ENCODE measurements at regions of chr2 and their contacts with region 1.

Region 1: GRCh38 chr2:95121407-95122196 is at the start of gene MRPS5:
- DNase-seq: peak; percentile 73 to 92 (median 84)
- H3K4me3 ChIP-seq: peak within 1 kb of the TSS; percentile 74 to 100 (median 95)
- H3K27ac ChIP-seq: peak within 1 kb of the TSS; percentile 66 to 99 (median 95)
- H3K27me3 ChIP-seq: no peaks in the 10 kb centered on the region
- CTCF ChIP-seq: peak in 28 of 56 donors; percentile 5 to 53 (median 26)
- total RNA-seq, gene MRPS5: 47.0 to 101 (median 70.2) TPM

Region 2: DNA sequence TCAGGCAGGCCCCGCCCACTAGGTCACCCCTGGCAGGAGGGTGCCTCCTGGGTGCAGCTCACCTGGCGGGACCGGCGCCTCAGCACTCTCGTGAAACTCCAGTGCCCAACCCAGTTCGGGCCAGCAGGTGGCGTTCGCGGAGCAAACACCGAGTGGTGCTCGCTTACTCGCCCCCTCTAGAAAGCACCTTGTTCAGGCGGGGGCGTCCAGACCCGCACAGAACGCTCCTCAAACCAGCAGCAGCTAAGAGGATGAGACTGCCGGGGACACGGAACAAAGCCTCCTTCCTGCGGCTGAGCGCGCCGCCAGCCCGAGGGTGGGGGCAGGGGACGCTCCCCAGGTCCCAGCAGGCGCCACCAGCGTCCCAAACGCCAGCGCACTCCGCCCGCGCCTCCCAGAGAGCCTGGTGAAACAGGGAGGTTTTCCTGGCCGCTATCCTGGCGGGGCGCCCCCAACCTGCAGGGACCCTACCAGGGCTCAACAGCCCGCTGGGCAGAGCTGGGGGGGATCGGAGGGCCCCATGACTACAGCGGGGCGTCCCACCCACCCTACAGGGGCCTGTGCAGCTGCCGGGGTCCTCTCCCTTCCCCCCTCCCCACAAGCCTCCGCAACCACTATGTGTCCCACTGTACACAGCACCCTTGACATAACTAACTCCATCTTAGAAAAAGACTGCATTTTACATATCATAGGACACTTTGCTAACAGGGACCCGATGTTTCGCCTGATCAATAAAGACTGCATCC is 44.6 kb before region 1 on chr2:
- intact Hi-C with region 1: loop called in 1 of 2 experiments (anchors 5 kb)
- DNase-seq: peak; percentile 71 to 90 (median 88)
- H3K4me3 ChIP-seq: peak overlapping the region; percentile 33 to 80 (median 61)
- H3K27ac ChIP-seq: peak overlapping the region in 55 of 59 donors; percentile 0 to 98 (median 88)
- H3K27me3 ChIP-seq: peaks cover 0 to 18% (median 0%) of the 10 kb centered on the region in 45 donors
- CTCF ChIP-seq: peak; percentile 76 to 97 (median 89)

Region 3: DNA sequence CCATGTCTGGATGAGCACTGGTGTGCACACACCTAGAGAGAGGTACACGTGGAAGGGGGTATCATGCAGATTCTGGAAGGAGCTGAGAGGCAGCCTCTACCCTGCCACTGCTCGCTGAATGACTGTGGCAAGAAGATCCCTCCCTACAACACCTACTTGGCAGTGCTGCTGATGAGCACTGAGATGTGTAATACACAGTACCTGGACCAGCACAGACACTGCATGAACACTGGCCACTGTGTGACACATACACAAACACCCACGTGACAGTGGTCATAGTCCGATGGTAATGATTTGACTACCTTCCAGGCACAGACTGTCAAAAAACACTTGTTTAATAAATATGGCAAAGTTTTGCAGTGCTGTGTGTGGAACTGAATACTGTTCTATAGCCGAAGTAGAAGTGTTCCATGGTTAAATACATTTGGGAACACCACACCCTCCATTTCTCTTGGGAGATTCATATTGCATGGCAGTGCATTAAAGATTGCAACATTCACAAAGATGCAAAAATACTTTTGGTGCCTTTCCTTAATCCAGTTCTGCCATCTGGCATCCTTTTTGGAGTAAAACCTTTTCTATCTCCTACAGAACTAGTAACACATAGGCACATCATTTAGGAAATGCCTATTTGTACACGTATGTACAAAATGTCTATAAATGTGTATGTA is 29.6 kb before region 1 on chr2:
- intact Hi-C with region 1: no loop called
- DNase-seq: no peak
- H3K4me3 ChIP-seq: no peak overlapping the region
- H3K27ac ChIP-seq: peak overlapping the region in 5 of 59 donors; percentile 2 to 51 (median 10)
- H3K27me3 ChIP-seq: no peaks in the 10 kb centered on the region
- CTCF ChIP-seq: no peak

Region 4: DNA sequence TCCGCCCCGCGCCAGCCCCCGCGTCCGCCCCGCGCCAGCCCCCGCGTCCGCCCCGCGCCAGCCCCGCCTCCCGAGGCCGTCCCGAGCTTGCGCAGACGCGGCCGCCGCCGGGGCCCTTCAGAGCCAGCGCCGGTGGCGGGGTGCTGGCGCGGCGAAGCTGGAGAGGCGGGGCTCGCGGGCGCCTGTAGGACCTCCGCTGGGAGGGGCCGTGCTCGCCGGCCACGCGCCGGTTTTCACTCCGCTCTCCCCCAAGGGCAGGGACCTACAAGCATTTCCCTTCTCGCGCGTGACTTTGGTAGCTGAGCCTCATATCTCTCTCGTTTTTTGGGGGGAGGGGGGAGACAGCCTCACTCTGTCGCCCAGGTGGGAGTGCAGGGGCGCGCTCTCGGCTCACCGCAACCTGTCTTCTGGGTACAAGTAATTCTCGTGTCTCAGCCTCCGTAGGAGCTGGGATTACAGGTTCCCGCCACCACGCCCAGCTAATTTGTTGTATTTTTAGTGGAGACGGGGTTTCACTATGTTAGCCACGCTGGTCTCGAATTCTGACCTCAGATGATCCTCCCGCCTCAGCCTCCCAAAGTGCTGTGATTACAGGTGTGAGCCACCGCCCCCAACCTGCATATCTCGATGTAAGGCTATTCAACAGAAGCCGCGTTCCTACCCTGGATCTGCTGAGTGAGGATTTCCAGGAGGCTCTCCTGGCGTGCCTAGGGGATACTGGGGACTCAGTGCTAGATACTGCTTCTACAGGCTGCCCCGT is 38.3 kb after region 1 on chr2 and contains the start of gene ZNF514:
- intact Hi-C with region 1: loop called (anchors 2 to 5 kb)
- DNase-seq: peak; percentile 64 to 90 (median 78)
- H3K4me3 ChIP-seq: peak within 1 kb of the TSS; percentile 57 to 91 (median 83)
- H3K27ac ChIP-seq: peak within 1 kb of the TSS; percentile 29 to 95 (median 90)
- H3K27me3 ChIP-seq: no peaks in the 10 kb centered on the region
- CTCF ChIP-seq: peak in 1 of 56 donors; percentile 19
- total RNA-seq, gene ZNF514: 17.2 to 58.5 (median 36.2) TPM

Region 5: GRCh38 chr2:95165129-95166064 is 43.8 kb after region 1 on chr2 and contains the start of gene ZNF2:
- intact Hi-C with region 1: loop called in 1 of 2 experiments (anchors 2 kb)
- DNase-seq: peak; percentile 97 to 99 (median 98)
- H3K4me3 ChIP-seq: peak within 1 kb of the TSS; percentile 63 to 100 (median 92)
- H3K27ac ChIP-seq: peak within 1 kb of the TSS; percentile 53 to 99 (median 93)
- H3K27me3 ChIP-seq: no peaks in the 10 kb centered on the region
- CTCF ChIP-seq: peak in 40 of 56 donors; percentile 9 to 67 (median 41)
- total RNA-seq, gene ZNF2: 4.3 to 9.8 (median 6.6) TPM

Region 6: DNA sequence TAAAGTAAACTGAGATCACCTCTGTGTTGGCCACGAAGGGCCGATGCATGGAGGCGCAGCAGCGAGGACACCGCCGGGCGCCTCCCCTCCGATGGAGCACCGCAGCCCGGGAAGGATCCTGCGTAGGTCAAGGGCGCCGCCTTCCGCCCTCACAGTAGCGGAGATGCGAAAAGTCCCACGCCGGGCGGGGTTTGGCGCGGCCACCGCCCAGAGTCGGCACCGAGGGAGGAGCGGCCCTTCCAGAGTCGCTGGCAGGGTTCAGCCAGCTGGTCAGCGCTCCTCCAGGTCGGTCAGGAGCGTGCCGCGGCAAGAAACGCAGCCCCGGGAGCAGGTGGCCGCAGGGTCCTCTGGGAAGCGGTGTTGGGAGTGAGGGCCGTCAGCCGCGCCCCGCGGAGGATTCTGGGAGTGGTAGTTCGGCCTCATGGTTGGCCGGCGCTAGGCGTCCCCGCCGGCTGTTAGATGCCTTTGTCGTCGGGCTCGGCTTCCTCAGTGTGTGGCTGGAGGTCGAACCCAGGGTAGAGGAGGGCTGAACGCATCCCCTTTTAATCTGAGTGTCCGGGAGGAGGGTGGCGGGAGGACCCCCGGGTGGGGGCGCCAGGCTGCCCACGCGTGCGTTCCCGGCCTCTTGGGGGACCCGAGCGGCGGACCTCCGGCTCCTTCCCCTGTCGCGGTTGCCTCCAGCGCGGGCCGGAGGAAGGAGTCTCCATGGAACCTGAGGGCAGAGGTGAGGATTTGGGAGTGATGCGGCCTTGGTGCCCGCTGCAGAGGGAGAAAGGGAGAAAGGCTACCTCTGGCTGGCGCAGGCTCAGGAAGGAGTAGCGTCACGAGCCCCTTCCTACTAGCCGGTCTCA is 85.7 kb after region 1 on chr2 and contains the start of gene ZNF892:
- intact Hi-C with region 1: loop called in 1 of 2 experiments (anchors 5 kb)
- DNase-seq: peak; percentile 87 to 95 (median 92)
- H3K4me3 ChIP-seq: peak within 1 kb of the TSS; percentile 66 to 98 (median 87)
- H3K27ac ChIP-seq: peak within 1 kb of the TSS in 58 of 59 donors; percentile 34 to 97 (median 90)
- H3K27me3 ChIP-seq: no peaks in the 10 kb centered on the region
- CTCF ChIP-seq: peak; percentile 19 to 89 (median 61)
- total RNA-seq, gene ZNF892: 11.3 to 29.3 (median 18.7) TPM

Region 7: DNA sequence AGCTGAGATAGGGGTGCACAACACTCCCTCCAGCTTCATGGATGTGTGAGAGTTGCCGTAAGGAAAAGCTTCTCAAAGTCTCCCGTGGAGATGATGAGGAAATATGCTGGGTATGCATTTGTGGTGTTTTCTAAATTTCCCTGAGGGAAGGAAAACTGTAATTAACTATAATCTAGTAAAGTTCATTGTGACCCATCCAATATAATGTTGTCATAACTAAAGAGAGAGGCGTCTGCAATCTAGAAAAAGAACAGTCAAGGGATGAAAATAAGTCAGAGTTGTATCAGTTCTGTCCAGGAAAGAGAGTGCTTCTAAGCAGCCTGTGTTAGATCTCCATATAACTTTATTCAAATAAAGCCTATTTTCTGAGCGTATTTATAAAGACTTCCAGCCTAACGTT is 1625.5 kb after region 1 on chr2:
- intact Hi-C with region 1: no loop called
- DNase-seq: no peak
- H3K4me3 ChIP-seq: no peak overlapping the region
- H3K27ac ChIP-seq: no peak overlapping the region
- H3K27me3 ChIP-seq: no peaks in the 10 kb centered on the region
- CTCF ChIP-seq: no peak